ENCODE measurements at regions of chr2 and their contacts with region 1.

Region 1: DNA sequence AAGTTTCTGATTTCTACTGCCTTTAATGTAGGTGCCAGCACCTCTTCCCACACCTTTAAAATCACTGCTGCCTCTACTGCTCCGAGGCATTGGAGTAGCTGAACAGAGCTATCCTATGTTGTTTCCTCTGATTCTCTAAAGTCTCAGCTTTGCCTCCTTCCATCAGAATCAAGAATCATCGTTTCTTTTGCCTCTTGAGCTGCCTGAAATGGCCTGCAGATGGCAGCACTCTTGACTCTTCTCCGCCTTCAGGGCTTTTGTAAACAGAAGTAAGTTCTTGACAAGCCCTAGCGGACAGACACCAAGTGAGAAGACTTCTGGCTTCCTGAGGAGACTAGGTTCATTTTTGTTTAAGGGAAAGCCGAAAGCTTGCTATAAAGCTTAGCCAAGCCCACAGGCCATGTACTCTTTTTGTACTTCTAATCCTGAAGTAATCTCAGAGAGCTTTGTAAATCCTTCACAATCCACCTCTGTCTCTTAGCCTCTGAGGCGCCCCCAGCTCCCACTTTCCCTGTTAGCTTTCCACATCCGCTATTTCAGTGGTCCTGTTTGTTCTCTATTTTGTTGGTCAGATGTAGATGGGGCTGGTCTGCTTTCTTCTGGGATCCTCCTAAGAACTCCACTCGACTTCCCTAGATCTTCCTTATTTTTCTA is 48.4 kb downstream of the GTF3C3 start:
- DNase-seq: peak; percentile 76 to 81
- ATAC-seq: peak; percentile 77
- H3K4me3 ChIP-seq: no peak overlapping the region
- H3K27ac ChIP-seq: no peak overlapping the region
- H3K4me1 ChIP-seq: no peaks in the 10 kb centered on the region
- H3K27me3 ChIP-seq: no peaks in the 10 kb centered on the region

Region 2: GRCh38 chr2:196535742-196536141 is 215.4 kb before region 1 on chr2:
- intact Hi-C with region 1: loop called in 1 of 2 experiments (anchors 10 kb)
- DNase-seq: no peak
- ATAC-seq: no peak
- H3K4me3 ChIP-seq: no peak overlapping the region
- H3K27ac ChIP-seq: no peak overlapping the region
- H3K4me1 ChIP-seq: no peaks in the 10 kb centered on the region
- H3K27me3 ChIP-seq: no peaks in the 10 kb centered on the region

Measured in aorta (tissue), 5 donors.